ENCODE measurements at regions of chr17 and their contacts with region 1.

Region 1: GRCh38 chr17:42132941-42133340 is 10.3 kb downstream of the HSPB9 start:
- DNase-seq: no peak
- ATAC-seq: peak; percentile 48
- H3K4me3 ChIP-seq: peak overlapping the region in 3 of 5 experiments; percentile 15 to 29 (median 15)
- H3K4me3 Mint-ChIP-seq: peak overlapping the region; percentile 54
- H3K27ac ChIP-seq: peak overlapping the region; percentile 65 to 75
- H3K27ac Mint-ChIP-seq: peak overlapping the region; percentile 93
- H3K4me1 ChIP-seq: peaks cover 58 to 64% of the 10 kb centered on the region in 2 donors
- H3K4me1 Mint-ChIP-seq: peaks cover 57% of the 10 kb centered on the region
- H3K27me3 ChIP-seq: no peaks in the 10 kb centered on the region
- H3K27me3 Mint-ChIP-seq: no peaks in the 10 kb centered on the region
- CTCF ChIP-seq: no peak

Region 2: DNA sequence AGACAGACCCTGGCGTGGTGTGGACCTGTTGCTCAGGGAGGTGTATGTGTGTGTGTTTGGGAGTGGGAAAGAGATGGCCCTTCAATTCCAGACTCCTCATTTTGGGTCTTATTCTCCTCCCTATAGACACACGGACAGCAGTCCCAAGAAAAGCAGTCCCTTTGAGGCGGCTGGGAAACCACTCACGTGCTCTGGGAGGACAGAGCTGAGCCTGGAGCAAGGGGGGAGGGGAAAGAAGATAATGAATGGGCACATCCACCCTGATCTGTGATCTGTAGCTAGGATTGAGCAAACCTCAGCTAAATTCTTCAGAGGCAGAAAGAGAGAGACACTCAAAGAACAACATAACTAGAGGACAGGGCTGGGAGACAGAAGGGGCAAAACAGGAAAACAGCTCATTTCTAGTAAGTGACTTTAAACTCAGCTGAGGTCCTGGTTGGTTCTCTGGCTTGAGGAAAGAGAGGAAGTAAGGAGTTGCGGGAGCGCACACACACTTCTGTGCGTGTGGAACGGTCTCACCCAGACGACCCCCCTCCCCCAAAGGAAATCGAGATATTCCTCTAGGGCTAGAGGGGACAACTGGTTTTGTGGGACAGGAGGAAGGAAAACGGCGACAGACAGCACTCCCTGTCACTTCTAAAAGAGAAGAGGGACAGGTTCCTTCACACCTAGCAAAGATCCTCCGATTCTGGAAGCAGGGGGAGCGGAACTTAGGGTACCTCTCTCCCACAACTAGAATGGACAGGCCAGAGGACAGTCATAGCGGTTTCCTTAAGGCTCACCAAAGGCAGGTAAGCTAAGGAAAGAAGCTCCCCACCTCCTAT is 21.2 kb after region 1 on chr17:
- CTCF ChIA-PET with region 1: no interaction called
- POLR2A ChIA-PET with region 1: interaction called, 4 read pairs
- intact Hi-C with region 1: loop called (anchors 2 kb)
- DNase-seq: no peak
- ATAC-seq: no peak
- H3K4me3 ChIP-seq: peak overlapping the region; percentile 91 to 100 (median 99)
- H3K4me3 Mint-ChIP-seq: peak overlapping the region; percentile 94
- H3K27ac ChIP-seq: peak overlapping the region; percentile 74 to 94
- H3K27ac Mint-ChIP-seq: peak overlapping the region; percentile 96
- H3K4me1 ChIP-seq: peaks cover 14 to 23% of the 10 kb centered on the region in 2 donors
- H3K4me1 Mint-ChIP-seq: peaks cover 34% of the 10 kb centered on the region
- H3K27me3 ChIP-seq: no peaks in the 10 kb centered on the region
- H3K27me3 Mint-ChIP-seq: no peaks in the 10 kb centered on the region
- CTCF ChIP-seq: no peak

Region 3: DNA sequence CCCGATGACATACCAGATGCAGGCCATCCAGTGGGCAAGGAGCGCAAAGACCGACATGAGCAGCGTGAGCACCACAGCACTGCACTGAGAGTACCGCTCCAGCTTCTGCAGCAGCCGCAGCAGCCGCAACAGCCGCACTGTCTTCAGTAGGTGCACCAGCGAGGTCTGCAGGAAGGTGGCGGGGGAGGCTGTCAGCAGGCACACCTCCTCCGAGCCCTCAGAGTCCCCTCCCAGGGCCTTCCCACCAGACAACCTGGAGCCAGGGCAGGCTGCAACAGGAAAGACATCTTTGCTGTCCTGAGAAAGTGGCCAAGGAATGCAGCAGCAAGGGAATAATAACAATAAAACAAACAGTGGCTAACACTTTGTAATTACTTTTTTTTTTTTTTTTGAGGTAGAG is 38.9 kb after region 1 on chr17:
- CTCF ChIA-PET with region 1: no interaction called
- POLR2A ChIA-PET with region 1: no interaction called
- intact Hi-C with region 1: no loop called
- DNase-seq: no peak
- ATAC-seq: no peak
- H3K4me3 ChIP-seq: no peak overlapping the region
- H3K4me3 Mint-ChIP-seq: no peak overlapping the region
- H3K27ac ChIP-seq: no peak overlapping the region
- H3K27ac Mint-ChIP-seq: no peak overlapping the region
- H3K4me1 ChIP-seq: no peaks in the 10 kb centered on the region
- H3K4me1 Mint-ChIP-seq: peaks cover 1% of the 10 kb centered on the region
- H3K27me3 ChIP-seq: no peaks in the 10 kb centered on the region
- H3K27me3 Mint-ChIP-seq: no peaks in the 10 kb centered on the region
- CTCF ChIP-seq: no peak